Naive thymus-derived CD4-positive, alpha-beta T cell (primary cell): ENCODE measurements at regions of chr1 and their contacts with region 1.

Region 1: GRCh38 chr1:152034646-152035405 is 2.0 kb downstream of the S100A11 start:
- DNase-seq: peak in 8 of 9 donors; percentile 60 to 78 (median 74)
- ATAC-seq: peak; percentile 82
- H3K4me3 ChIP-seq: peak overlapping the region; percentile 70
- H3K4me3 Mint-ChIP-seq: peak overlapping the region; percentile 88 to 99 (median 96)
- H3K27ac ChIP-seq: peak overlapping the region; percentile 81
- H3K27ac Mint-ChIP-seq: peak overlapping the region; percentile 95 to 100 (median 98)
- H3K4me1 ChIP-seq: peaks cover 21 to 22% of the 10 kb centered on the region in 2 donors
- H3K4me1 Mint-ChIP-seq: peaks cover 26 to 60% (median 41%) of the 10 kb centered on the region in 7 donors
- H3K27me3 ChIP-seq: no peaks in the 10 kb centered on the region
- H3K27me3 Mint-ChIP-seq: no peaks in the 10 kb centered on the region

Region 2: DNA sequence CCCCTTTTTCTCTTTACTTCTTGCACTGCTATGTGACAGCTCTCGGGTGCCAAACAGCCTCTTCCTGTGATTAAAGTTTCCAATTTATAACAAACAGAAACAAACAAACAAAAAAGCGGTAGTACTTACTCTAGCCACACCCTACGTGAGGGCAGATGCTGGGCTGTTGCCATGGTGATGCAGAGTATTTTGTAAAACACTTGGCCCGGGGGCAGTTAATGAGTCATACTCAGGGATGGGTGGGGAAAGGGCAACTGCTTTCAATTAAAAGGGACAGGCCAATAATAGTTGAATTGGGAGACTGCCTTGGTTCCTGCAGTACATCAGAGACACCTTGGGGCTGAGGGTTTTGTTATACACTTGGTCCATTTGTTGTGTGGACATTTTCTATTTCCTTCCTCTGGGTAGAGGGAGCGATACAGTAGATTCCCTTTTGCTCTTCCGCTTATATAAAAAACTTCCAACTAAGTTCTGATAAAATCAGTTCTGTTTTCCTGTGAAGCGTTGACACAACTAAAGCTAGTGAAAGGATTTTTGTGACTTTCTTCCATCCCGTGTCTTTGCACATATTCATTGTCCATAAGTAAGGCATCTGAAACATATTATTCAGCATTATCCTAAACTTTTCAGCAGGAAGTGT is 89.0 kb before region 1 on chr1:
- CTCF ChIA-PET with region 1: no interaction called
- POLR2A ChIA-PET with region 1: no interaction called
- intact Hi-C with region 1: loop called in 1 of 2 experiments (anchors 1 kb)
- DNase-seq: peak in 8 of 9 donors; percentile 20 to 70 (median 45)
- ATAC-seq: peak; percentile 78
- H3K4me3 ChIP-seq: no peak overlapping the region
- H3K4me3 Mint-ChIP-seq: peak overlapping the region in 4 of 10 donors; percentile 8 to 73 (median 28)
- H3K27ac ChIP-seq: no peak overlapping the region
- H3K27ac Mint-ChIP-seq: peak overlapping the region in 6 of 9 donors; percentile 5 to 91 (median 45)
- H3K4me1 ChIP-seq: peaks cover 9 to 24% of the 10 kb centered on the region in 2 donors
- H3K4me1 Mint-ChIP-seq: peaks cover 11 to 38% (median 15%) of the 10 kb centered on the region in 7 donors
- H3K27me3 ChIP-seq: no peaks in the 10 kb centered on the region
- H3K27me3 Mint-ChIP-seq: peaks cover 0 to 3% (median 0%) of the 10 kb centered on the region in 5 donors

Region 3: GRCh38 chr1:152001391-152002249 is 33.2 kb before region 1 on chr1:
- CTCF ChIA-PET with region 1: interaction called, 17 read pairs
- POLR2A ChIA-PET with region 1: interaction called, 4 read pairs
- intact Hi-C with region 1: no loop called
- DNase-seq: peak; percentile 51 to 70 (median 67)
- ATAC-seq: peak; percentile 83
- H3K4me3 ChIP-seq: no peak overlapping the region
- H3K4me3 Mint-ChIP-seq: no peak overlapping the region
- H3K27ac ChIP-seq: no peak overlapping the region
- H3K27ac Mint-ChIP-seq: peak overlapping the region in 1 of 9 donors; percentile 62
- H3K4me1 ChIP-seq: no peaks in the 10 kb centered on the region
- H3K4me1 Mint-ChIP-seq: peaks cover 0 to 16% (median 0%) of the 10 kb centered on the region in 7 donors
- H3K27me3 ChIP-seq: no peaks in the 10 kb centered on the region
- H3K27me3 Mint-ChIP-seq: peaks cover 0 to 42% (median 0%) of the 10 kb centered on the region in 5 donors

Region 4: DNA sequence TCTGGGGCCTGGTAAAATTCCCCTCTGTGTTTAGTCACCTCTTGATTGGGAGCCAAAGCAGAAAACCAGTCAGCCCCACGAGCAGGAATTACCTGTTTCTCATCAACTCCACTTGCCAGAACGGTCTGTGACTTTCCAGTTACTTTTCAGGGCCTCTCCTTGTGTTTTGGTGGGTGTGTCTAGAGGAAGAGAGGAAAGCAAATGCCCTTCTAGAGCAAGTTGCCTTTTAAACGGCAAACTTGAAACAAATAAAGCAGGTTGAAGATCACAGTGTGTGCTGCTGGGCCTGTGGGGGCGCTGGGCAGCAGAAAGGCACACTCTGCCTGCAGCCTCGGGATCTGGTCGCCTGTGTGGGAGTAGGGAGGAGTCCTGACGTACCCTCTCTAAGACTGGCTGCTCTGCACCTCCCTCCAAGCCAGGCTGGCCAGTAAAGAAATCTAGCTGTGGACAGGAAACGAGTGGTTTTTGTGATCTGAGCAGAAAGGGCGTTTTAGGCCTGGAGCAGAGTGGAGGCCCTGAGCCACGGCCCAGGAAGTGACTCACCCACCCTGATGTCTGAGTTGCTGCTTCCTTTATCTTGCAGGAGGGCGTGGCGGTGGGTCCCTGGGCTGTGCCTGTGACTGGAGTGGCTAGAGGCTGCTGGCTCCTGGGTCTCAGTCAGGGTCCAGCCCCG is 13.0 kb after region 1 on chr1:
- CTCF ChIA-PET with region 1: interaction called, 27 read pairs
- POLR2A ChIA-PET with region 1: interaction called, 90 read pairs
- intact Hi-C with region 1: loop called (anchors 1 kb)
- DNase-seq: peak; percentile 57 to 82 (median 76)
- ATAC-seq: peak; percentile 93
- H3K4me3 ChIP-seq: peak overlapping the region; percentile 10
- H3K4me3 Mint-ChIP-seq: peak overlapping the region; percentile 56 to 87 (median 77)
- H3K27ac ChIP-seq: peak overlapping the region; percentile 81
- H3K27ac Mint-ChIP-seq: peak overlapping the region; percentile 92 to 98 (median 98)
- H3K4me1 ChIP-seq: peaks cover 19 to 21% of the 10 kb centered on the region in 2 donors
- H3K4me1 Mint-ChIP-seq: peaks cover 21 to 53% (median 30%) of the 10 kb centered on the region in 7 donors
- H3K27me3 ChIP-seq: no peaks in the 10 kb centered on the region
- H3K27me3 Mint-ChIP-seq: peaks cover 0 to 3% (median 0%) of the 10 kb centered on the region in 5 donors